CD8-positive, alpha-beta memory T cell (primary cell): ENCODE measurements at regions of chr17 and their contacts with region 1.

Region 1: GRCh38 chr17:49830605-49831004 is 17.3 kb downstream of the TAC4 start:
- DNase-seq: no peak
- H3K4me3 ChIP-seq: no peak overlapping the region
- H3K4me3 Mint-ChIP-seq: no peak overlapping the region
- H3K27ac ChIP-seq: no peak overlapping the region
- H3K27ac Mint-ChIP-seq: peak overlapping the region in 2 of 8 donors; percentile 17 to 57
- H3K4me1 ChIP-seq: no peaks in the 10 kb centered on the region
- H3K4me1 Mint-ChIP-seq: peaks cover 0 to 2% (median 0%) of the 10 kb centered on the region in 3 donors
- H3K27me3 ChIP-seq: no peaks in the 10 kb centered on the region
- H3K27me3 Mint-ChIP-seq: no peaks in the 10 kb centered on the region

Region 2: DNA sequence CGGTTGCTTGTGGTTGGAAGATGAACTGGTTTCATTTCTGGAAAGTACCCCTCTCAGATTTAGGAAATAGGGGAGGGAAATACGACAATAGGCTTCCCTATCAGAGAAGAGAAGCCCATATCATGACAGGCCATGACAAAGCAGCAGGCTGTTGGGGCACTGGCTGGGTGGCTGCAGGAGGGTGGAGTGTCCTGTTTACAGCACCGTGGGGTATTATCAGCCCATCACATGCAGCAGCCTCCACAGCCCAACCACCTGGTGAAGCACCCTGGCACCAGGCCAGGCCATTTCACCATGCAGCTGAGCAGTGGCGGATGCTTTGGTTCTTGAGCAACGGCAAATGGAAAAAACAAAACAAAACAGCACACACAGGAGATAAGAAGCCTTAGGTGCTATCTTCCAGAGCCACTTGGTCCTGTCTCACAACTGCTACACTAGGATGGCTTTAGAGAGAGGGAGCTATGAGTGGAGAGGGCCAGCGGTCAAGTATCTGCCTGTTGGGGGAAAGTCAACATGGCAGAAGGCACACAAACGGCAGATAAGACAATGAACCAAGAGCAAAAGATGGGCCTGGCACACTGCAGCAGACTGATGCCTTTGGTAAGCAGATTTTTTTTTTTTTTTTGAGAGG is 90.8 kb before region 1 on chr17:
- CTCF ChIA-PET with region 1: no interaction called
- POLR2A ChIA-PET with region 1: no interaction called
- DNase-seq: peak; percentile 94 to 99 (median 97)
- H3K4me3 ChIP-seq: peak overlapping the region; percentile 81
- H3K4me3 Mint-ChIP-seq: peak overlapping the region; percentile 90 to 98 (median 95)
- H3K27ac ChIP-seq: peak overlapping the region; percentile 88
- H3K27ac Mint-ChIP-seq: peak overlapping the region; percentile 97 to 100 (median 100)
- H3K4me1 ChIP-seq: peaks cover 95% of the 10 kb centered on the region
- H3K4me1 Mint-ChIP-seq: peaks cover 86 to 97% (median 93%) of the 10 kb centered on the region in 3 donors
- H3K27me3 ChIP-seq: no peaks in the 10 kb centered on the region
- H3K27me3 Mint-ChIP-seq: no peaks in the 10 kb centered on the region

Region 3: DNA sequence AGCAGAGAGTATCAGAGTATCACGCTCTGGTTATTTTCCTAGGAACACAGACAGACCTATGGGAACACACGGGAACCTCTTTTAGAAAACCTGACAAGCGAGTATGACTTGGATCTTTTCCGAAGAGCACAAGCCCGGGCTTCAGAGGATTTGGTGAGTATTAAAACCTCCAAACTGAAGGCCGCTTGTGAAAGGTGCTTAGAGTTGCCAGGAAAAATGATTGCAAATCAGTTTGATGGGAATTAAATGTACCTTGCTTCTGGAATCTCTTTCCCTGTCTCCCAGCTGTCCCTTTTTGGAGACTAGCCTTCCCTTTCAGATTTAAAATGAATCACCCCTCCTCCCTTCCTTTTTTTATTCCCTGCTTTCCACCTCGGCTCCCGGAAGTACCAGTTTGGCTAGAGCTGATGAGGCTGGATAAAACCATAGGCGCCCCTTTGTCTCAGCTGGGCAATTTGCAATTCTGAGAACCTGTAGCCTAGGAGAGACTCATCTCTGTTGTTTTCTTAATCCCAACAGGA is 14.8 kb before region 1 on chr17:
- CTCF ChIA-PET with region 1: no interaction called
- POLR2A ChIA-PET with region 1: interaction called, 13 read pairs
- DNase-seq: no peak
- H3K4me3 ChIP-seq: no peak overlapping the region
- H3K4me3 Mint-ChIP-seq: no peak overlapping the region
- H3K27ac ChIP-seq: no peak overlapping the region
- H3K27ac Mint-ChIP-seq: peak overlapping the region in 7 of 8 donors; percentile 20 to 97 (median 63)
- H3K4me1 ChIP-seq: peaks cover 66% of the 10 kb centered on the region
- H3K4me1 Mint-ChIP-seq: peaks cover 48 to 70% (median 70%) of the 10 kb centered on the region in 3 donors
- H3K27me3 ChIP-seq: no peaks in the 10 kb centered on the region
- H3K27me3 Mint-ChIP-seq: peaks cover 0 to 4% of the 10 kb centered on the region in 2 donors